Activated T-helper 1 cell treated with anti-CD3 and anti-CD28 coated beads, Interleukin-12 subunit alpha, Interleukin-12 subunit beta, Interleukin-2, Interleukin-4 antibody, amounts not matched to agents 30 ng/mL and 10 ng/mL and 1 ng/mL, durations not matched to agents 14 hours and 24 hours and 36 hours (primary cell): ENCODE measurements at regions of chr9 and their contacts with region 1.

Region 1: GRCh38 chr9:113401027-113401792 is at the start of gene ALAD:
- DNase-seq: peak; percentile 99
- H3K4me3 Mint-ChIP-seq: peak within 1 kb of the TSS; percentile 89
- H3K27ac Mint-ChIP-seq: peak within 1 kb of the TSS; percentile 67
- H3K4me1 Mint-ChIP-seq: peaks cover 25% of the 10 kb centered on the region
- H3K27me3 Mint-ChIP-seq: no peaks in the 10 kb centered on the region
- total RNA-seq, gene ALAD: 23.0 and 23.7 TPM in 2 replicates

Region 2: GRCh38 chr9:113340017-113340699 is 61.1 kb before region 1 on chr9 and contains the start of gene WDR31:
- intact Hi-C with region 1: loop called (anchors 1 kb)
- DNase-seq: peak; percentile 78
- H3K4me3 Mint-ChIP-seq: peak within 1 kb of the TSS; percentile 80
- H3K27ac Mint-ChIP-seq: peak within 1 kb of the TSS; percentile 89
- H3K4me1 Mint-ChIP-seq: peaks cover 49% of the 10 kb centered on the region
- H3K27me3 Mint-ChIP-seq: no peaks in the 10 kb centered on the region
- total RNA-seq, gene WDR31: 1.9 and 2.2 TPM in 2 replicates

Region 3: DNA sequence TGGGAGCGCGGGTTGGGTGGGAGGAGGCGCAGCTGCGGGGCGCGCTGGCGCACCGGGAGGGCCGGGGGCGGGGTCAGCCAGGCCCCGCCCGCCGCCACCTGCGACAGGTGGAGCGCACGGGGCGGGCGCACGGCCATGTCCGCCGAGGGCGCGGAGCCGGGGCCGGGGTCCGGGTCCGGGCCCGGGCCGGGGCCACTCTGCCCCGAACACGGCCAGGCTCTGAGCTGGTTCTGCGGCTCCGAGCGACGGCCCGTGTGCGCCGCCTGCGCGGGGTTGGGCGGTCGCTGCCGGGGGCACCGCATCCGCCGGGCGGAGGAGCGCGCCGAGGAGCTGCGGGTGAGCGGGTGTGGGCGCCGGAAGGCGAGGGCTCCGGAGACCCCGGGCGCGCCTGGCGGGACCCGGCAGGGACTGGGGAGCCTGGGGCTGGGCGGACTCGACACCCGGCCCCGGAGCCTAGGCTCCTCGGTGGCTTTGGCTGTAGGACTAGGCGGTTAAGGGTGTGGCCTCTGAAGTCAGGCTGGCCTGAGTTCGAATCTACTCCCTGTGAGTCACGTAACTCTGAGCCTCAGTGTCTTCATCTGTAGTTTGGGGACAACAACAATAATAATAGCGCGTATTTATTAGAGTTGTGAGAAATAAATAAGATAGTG is 51.6 kb before region 1 on chr9 and contains the start of gene BSPRY:
- intact Hi-C with region 1: loop called (anchors 1 kb)
- DNase-seq: peak; percentile 51
- H3K4me3 Mint-ChIP-seq: peak within 1 kb of the TSS; percentile 93
- H3K27ac Mint-ChIP-seq: peak within 1 kb of the TSS; percentile 92
- H3K4me1 Mint-ChIP-seq: peaks cover 68% of the 10 kb centered on the region
- H3K27me3 Mint-ChIP-seq: no peaks in the 10 kb centered on the region
- total RNA-seq, gene BSPRY: 12.3 and 12.8 TPM in 2 replicates